A673 (cell line): ENCODE measurements at regions of chr1 and their contacts with region 1.

Region 1: GRCh38 chr1:68346188-68346808 is 103.5 kb downstream of the RPE65 start:
- DNase-seq: peak; percentile 70
- H3K4me3 ChIP-seq: no peak overlapping the region
- H3K27ac ChIP-seq: no peak overlapping the region
- H3K4me1 ChIP-seq: no peaks in the 10 kb centered on the region
- H3K27me3 ChIP-seq: no peaks in the 10 kb centered on the region
- CTCF ChIP-seq: peak; percentile 63

Region 2: DNA sequence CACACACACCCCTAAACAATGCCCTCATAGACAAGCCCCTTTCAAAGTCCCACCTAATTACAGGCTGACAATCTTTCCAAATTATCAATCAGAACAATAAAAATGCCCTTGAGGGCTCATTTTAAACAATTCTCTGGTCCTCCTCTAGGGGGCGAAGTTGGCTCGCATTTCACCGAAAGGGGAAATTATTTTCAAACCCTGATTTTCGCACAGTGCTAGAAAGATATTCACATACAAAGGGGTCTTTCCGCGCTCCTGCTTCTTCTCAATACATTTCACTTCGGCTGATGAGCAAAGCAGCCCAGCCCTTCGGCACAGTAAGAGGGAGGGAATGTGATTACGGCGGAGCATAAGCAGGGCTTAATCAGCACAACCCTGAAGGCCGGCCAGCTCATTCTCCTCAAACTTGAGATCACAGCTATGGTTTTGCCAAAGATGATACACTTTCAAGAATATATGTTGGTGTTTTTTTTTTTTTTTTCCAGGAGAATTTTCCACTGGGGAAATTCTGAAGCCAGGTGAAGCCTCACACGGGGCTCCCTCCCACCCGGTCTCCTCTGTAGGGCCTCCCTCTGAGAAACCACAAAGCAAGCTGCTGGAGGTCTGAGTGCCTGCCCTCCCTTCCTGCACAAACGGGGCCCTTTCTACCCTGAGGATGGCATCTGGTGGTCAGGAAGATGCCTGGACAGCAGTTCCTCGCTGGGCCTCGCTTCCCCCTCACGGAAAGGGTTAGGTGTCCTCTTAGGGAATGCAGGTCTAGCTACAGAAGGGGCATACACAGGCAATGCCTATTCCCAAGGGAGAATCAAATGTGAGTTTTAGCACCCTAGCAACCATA is 579.9 kb before region 1 on chr1:
- CTCF ChIA-PET with region 1: interaction called, 13 read pairs
- POLR2A ChIA-PET with region 1: no interaction called
- intact Hi-C with region 1: loop called (anchors 2 kb)
- DNase-seq: peak; percentile 75
- H3K4me3 ChIP-seq: no peak overlapping the region
- H3K27ac ChIP-seq: no peak overlapping the region
- H3K4me1 ChIP-seq: no peaks in the 10 kb centered on the region
- H3K27me3 ChIP-seq: no peaks in the 10 kb centered on the region
- CTCF ChIP-seq: peak; percentile 81

Region 3: DNA sequence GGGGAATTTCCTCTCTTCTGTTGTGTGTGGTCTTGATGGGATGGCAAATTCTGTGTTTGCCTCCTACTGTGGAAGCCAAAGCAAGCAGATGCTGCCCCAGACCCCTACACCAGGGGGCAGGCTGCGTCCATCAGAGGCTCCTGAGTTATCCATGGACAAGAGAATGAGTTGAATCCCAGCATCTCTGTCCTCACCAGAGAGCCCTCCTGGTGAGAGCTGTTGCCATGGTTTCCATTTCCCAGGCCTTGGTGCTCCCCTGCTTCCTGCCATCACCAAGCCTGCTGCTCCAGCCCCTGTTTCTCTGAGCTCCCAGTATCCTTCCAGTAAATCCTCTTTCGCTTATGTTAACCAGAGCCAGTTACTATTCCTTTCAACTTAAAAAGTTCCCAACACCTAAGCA is 492.6 kb before region 1 on chr1:
- CTCF ChIA-PET with region 1: no interaction called
- POLR2A ChIA-PET with region 1: no interaction called
- intact Hi-C with region 1: loop called (anchors 2 kb)
- DNase-seq: peak; percentile 83
- H3K4me3 ChIP-seq: no peak overlapping the region
- H3K27ac ChIP-seq: no peak overlapping the region
- H3K4me1 ChIP-seq: no peaks in the 10 kb centered on the region
- H3K27me3 ChIP-seq: no peaks in the 10 kb centered on the region
- CTCF ChIP-seq: peak; percentile 77

Region 4: GRCh38 chr1:68057564-68057963 is 288.7 kb before region 1 on chr1:
- CTCF ChIA-PET with region 1: no interaction called
- POLR2A ChIA-PET with region 1: no interaction called
- intact Hi-C with region 1: no loop called
- DNase-seq: no peak
- H3K4me3 ChIP-seq: no peak overlapping the region
- H3K27ac ChIP-seq: no peak overlapping the region
- H3K4me1 ChIP-seq: no peaks in the 10 kb centered on the region
- H3K27me3 ChIP-seq: no peaks in the 10 kb centered on the region
- CTCF ChIP-seq: 0 out of 2 replicates have a peak, but pooled peaks have one; percentile 26

Region 5: GRCh38 chr1:68120136-68120791 is 226.0 kb before region 1 on chr1:
- CTCF ChIA-PET with region 1: interaction called, 37 read pairs
- POLR2A ChIA-PET with region 1: no interaction called
- intact Hi-C with region 1: loop called (anchors 1 kb)
- DNase-seq: peak; percentile 75
- H3K4me3 ChIP-seq: no peak overlapping the region
- H3K27ac ChIP-seq: no peak overlapping the region
- H3K4me1 ChIP-seq: peaks cover 3% of the 10 kb centered on the region
- H3K27me3 ChIP-seq: no peaks in the 10 kb centered on the region
- CTCF ChIP-seq: peak; percentile 78

Region 6: GRCh38 chr1:68136186-68136585 is 210.1 kb before region 1 on chr1:
- CTCF ChIA-PET with region 1: no interaction called
- POLR2A ChIA-PET with region 1: no interaction called
- intact Hi-C with region 1: no loop called
- DNase-seq: no peak
- H3K4me3 ChIP-seq: no peak overlapping the region
- H3K27ac ChIP-seq: no peak overlapping the region
- H3K4me1 ChIP-seq: no peaks in the 10 kb centered on the region
- H3K27me3 ChIP-seq: no peaks in the 10 kb centered on the region
- CTCF ChIP-seq: no peak

Region 7: DNA sequence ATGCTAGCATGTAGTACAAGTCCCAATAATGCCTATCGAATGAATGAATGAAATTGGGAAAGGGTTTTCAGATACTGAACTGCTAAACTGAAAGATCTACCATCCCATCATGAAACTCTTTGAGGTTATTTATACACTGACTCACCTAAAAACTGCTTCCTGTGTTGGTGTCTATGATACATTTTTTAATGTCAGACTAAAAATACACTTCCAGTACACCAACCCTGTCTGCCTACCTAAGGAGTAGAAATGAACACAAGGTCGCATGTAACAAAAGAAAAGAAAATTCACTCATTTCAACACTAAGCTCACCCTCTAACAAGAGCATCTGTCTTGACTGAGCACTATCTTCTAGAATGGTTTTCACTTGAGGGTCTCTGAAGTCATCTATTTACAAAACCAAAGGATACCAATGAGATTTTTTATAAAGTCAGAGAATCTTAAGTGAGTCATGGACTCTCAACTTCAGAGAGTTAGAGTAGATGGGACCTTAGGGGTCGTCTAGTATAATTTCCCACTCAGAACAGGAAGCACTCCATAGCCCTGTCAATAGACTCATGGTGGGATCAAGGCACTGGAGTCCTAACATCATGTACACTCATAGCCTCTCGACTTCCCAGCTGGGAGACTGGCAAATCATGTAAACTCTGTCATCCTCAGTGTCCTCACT is 167.3 kb before region 1 on chr1:
- CTCF ChIA-PET with region 1: interaction called, 11 read pairs
- POLR2A ChIA-PET with region 1: no interaction called
- intact Hi-C with region 1: no loop called
- DNase-seq: no peak
- H3K4me3 ChIP-seq: no peak overlapping the region
- H3K27ac ChIP-seq: no peak overlapping the region
- H3K4me1 ChIP-seq: peaks cover 14% of the 10 kb centered on the region
- H3K27me3 ChIP-seq: no peaks in the 10 kb centered on the region
- CTCF ChIP-seq: no peak

Region 8: DNA sequence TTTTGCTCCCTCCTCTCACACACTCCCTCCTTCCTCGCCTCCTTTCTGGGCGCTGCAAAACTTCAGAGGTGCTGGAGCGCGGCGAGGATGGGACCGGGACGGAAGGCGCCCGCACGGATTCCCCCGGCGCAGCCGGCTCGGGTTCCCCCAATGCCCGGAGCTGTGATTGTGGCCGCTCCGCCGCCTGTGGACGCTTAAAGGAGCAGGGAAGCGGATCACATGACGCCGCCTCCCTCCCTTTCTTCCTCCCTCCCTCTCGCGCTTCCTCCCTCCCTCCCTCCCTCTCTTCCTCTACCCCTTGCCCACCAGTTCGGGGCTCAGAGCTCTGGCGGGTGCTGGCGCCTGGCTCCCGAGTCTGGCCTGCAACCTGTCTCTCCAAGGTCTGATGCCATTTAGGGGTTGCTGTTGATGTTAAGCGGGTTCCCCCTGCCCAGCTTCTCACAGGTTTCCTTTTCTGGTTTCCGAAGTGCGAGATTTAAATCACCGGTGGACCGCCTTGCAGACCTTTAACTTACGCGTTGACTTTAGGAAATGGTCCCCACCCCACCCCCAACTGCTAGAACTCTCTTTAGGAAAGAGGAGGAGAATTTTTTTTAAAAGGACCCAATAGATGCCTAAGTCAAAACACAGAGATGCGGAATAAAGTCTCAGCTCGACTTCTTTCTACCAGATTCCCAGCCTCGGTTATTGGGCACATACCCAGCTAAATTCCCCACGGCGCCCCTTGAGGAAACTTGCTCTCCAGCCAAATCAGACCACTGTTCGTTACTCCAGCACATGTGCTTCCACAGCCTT is 113.7 kb before region 1 on chr1 and contains the start of gene WLS:
- CTCF ChIA-PET with region 1: interaction called, 7 read pairs
- POLR2A ChIA-PET with region 1: interaction called, 14 read pairs
- intact Hi-C with region 1: loop called (anchors 5 kb)
- DNase-seq: peak; percentile 92
- H3K4me3 ChIP-seq: peak within 1 kb of the TSS; percentile 71
- H3K27ac ChIP-seq: peak within 1 kb of the TSS; percentile 90
- H3K4me1 ChIP-seq: peaks cover 39% of the 10 kb centered on the region
- H3K27me3 ChIP-seq: no peaks in the 10 kb centered on the region
- CTCF ChIP-seq: no peak
- total RNA-seq, gene WLS: 144 and 149 TPM in 2 replicates

Region 9: GRCh38 chr1:68442822-68443556 is 96.7 kb after region 1 on chr1:
- CTCF ChIA-PET with region 1: no interaction called
- POLR2A ChIA-PET with region 1: no interaction called
- intact Hi-C with region 1: loop called (anchors 1 kb)
- DNase-seq: peak; percentile 79
- H3K4me3 ChIP-seq: no peak overlapping the region
- H3K27ac ChIP-seq: no peak overlapping the region
- H3K4me1 ChIP-seq: peaks cover 3% of the 10 kb centered on the region
- H3K27me3 ChIP-seq: no peaks in the 10 kb centered on the region
- CTCF ChIP-seq: peak; percentile 82

Region 10: DNA sequence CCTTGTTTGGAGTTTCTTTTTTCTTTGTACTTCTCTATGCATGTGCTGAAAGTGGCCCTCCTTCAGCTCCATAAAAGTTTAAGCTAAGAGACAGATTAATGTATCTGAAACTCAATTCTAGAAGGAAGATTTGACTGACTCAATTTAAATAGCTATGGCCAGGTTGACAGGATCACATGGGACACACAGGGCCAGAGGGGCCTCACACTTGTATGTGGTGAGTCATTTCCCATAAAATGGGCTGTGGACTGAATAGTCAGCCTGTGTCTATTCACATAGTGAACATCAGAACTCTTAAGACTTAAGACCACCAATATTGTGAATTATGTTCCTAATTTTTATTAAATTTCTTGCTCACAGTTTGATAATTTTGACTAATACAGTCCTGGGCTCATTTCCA is 196.3 kb after region 1 on chr1:
- CTCF ChIA-PET with region 1: no interaction called
- POLR2A ChIA-PET with region 1: no interaction called
- intact Hi-C with region 1: no loop called
- DNase-seq: peak; percentile 12
- H3K4me3 ChIP-seq: no peak overlapping the region
- H3K27ac ChIP-seq: no peak overlapping the region
- H3K4me1 ChIP-seq: no peaks in the 10 kb centered on the region
- H3K27me3 ChIP-seq: no peaks in the 10 kb centered on the region
- CTCF ChIP-seq: no peak

Region 11: GRCh38 chr1:68600049-68600661 is 253.9 kb after region 1 on chr1:
- CTCF ChIA-PET with region 1: no interaction called
- POLR2A ChIA-PET with region 1: no interaction called
- intact Hi-C with region 1: no loop called
- DNase-seq: peak; percentile 26
- H3K4me3 ChIP-seq: no peak overlapping the region
- H3K27ac ChIP-seq: no peak overlapping the region
- H3K4me1 ChIP-seq: no peaks in the 10 kb centered on the region
- H3K27me3 ChIP-seq: no peaks in the 10 kb centered on the region
- CTCF ChIP-seq: peak; percentile 76